ENCODE measurements at regions of chr19 and their contacts with region 1.

Region 1: DNA sequence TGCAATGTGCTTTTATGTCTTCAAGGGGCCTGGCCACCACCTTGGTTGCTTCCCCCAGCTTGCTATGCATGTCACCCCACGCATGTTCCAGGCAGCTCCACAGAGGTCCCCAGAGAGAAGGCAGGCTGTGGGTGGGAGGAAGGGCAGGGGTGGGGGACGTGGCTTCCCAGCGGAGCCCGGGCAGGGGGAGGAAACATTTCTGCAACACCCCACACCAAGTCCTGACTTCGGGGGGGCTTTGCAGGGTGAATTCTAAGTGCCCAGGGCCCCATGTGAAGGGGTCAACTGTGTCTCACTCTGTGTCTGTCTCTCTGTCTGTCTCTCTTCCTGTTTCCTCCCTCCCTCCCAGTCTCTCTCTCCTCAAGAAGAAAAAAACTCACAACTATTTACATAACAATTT is 39.6 kb downstream of the LTBP4 start:
- DNase-seq: peak; percentile 83

Region 2: GRCh38 chr19:40598121-40598917 is 42.4 kb before region 1 on chr19:
- intact Hi-C with region 1: no loop called
- DNase-seq: peak; percentile 96

Region 3: DNA sequence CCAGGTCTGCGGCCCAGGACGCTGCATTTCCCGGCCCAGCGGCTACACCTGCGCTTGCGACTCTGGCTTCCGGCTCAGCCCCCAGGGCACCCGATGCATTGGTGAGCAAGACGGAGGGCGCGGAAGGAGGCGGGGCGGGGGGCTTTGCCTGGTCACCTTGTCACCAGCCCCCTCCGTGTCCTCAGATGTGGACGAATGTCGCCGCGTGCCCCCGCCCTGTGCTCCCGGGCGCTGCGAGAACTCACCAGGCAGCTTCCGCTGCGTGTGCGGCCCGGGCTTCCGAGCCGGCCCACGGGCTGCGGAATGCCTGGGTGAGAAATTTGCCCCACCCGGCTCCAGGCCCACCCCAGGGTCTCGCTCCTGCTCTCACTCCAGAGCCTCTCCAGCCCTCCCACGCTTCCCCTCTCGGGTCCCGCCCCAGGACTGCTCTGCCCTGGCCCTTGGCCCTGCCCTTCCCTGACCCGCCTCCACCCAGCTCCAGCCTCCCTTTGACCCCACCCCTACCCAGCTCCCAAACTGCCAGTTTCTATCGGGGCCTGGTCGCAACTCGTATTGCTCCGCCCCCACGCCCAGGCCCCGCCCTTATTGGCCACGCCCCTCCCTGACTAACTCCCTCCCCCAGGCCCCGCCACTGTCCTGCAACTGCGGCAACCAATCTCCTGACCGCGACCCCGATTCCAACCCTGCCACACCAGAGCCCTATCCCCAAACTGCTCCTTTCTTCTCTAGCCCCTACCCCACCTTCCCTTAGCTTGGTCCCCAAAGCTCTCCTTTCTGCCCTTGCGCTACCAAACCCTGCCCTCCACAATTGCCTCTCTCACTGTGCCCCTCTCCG is 31.0 kb before region 1 on chr19:
- intact Hi-C with region 1: loop called in 1 of 2 experiments (anchors 5 kb)
- DNase-seq: peak; percentile 97

Region 4: DNA sequence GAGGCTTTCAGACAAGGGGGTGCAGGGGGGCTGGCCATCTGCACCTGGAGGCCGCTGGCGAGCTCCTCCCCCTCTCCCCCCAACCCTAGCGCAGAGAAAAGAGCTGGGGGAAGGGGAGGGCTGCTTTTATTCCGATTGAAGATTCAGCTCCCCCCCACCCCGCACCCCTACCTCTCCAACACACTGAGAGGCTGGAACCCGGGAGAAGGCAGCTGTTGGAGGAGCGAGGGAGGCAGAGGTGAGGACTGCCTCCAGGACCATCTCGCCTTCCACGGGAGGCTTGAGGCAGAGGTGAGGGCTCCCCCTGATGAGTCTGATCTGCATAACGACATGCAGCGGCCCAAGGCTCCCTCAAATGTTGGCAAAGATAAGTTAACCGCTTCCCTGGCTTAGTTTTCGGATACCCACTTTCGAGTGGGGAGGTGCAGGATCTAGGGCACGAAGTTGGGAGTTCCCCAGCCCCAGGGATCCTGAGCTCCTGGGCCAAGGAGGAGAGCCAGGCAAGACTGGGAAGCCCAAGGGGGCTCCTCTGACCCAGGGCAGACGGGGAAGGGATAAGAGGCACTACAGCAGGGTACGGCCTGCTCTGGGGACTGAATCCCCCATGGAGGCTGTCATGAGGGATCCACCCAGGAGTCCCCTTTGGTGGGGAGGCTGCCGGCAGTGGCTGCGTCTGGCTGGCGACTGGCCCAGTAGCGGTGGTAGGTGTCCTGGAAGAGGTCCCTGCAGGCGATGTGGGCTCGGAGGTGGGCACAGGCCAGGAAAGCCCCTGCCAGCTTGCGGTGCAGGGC is 50.9 kb after region 1 on chr19:
- intact Hi-C with region 1: no loop called
- DNase-seq: no peak